PC-9 (cell line): ENCODE measurements at regions of chr10 and their contacts with region 1.

Region 1: DNA sequence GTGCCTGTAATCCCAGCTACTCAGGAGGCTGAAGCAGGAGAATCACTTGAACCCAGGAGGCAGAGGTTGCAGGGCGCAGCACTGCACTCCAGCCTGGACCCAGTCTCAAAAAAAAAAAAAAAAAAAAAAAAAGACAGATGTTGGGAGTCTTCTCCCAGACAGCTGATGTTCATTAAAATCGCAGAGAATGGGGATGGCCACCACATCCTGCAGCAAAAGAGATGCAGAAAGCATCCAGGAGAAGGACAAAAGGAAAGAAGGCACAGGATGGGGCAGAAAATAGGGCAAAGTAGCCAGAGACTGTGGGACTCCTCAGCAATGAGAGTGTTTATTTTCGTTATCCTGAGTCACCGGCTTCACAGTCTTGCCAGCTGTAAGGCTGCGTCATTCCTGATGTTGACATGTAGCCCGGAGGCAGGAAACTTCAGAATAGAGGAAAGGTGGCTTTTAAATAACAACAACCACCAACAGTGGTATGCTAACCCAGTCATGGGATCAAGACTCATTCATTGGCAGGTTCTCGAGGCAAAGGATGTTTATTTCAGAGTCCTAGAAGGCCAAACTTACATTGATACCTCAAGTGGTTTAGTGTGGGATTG is 149.5 kb upstream of the SVIL start:
- DNase-seq: peak; percentile 76 to 95
- H3K4me3 ChIP-seq: no peak overlapping the region
- H3K27ac ChIP-seq: peak overlapping the region; percentile 86
- H3K4me1 ChIP-seq: peaks cover 30% of the 10 kb centered on the region
- H3K27me3 ChIP-seq: no peaks in the 10 kb centered on the region
- CTCF ChIP-seq: no peak

Region 2: GRCh38 chr10:29277296-29277695 is 507.0 kb before region 1 on chr10:
- CTCF ChIA-PET with region 1: no interaction called
- POLR2A ChIA-PET with region 1: no interaction called
- intact Hi-C with region 1: no loop called
- DNase-seq: no peak
- H3K4me3 ChIP-seq: no peak overlapping the region
- H3K27ac ChIP-seq: no peak overlapping the region
- H3K4me1 ChIP-seq: no peaks in the 10 kb centered on the region
- H3K27me3 ChIP-seq: peaks cover 7% of the 10 kb centered on the region; the same call in 1 of the 2 replicates
- CTCF ChIP-seq: no peak

Region 3: DNA sequence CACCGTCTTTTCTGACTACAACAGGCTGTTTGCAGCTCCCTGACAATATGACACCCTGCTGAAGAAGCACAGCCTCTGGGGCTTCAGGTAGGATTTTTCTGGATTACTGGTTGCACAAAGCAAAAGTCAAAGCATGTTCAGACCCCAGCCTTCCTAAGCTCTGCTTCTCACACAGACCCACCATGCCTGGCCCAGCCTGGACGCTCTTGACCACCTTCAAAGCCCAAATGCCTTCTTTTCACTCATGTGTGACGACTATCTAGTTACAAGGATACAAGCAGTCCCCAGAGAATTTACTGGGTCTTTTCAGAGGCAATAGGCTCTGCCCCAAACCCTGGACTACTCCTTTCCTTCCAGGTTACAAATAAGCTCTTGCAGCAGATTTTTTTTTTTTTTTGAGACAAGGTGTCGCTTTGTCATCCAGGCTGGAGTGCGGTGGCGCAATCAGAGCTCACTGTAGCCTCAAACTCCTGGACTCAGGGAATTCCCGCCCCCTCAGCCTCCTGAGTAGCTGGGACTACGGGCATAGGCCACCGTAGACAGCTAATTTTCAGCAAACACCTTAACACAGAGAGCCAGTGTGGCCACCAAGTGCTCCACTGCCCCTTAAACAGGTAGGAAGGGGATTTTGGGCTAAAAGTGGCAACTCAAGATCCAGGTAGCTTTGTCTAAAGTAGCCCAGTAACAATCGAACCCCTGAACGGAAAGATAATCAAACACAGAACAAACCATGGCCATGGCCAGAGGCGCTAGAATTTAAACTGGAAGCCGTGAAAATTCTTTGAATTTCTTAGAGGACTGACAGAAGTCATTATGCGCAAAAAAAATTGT is 165.7 kb before region 1 on chr10:
- CTCF ChIA-PET with region 1: no interaction called
- POLR2A ChIA-PET with region 1: interaction called, 18 read pairs
- intact Hi-C with region 1: no loop called
- DNase-seq: peak; percentile 74 to 77
- H3K4me3 ChIP-seq: peak overlapping the region; percentile 35; the same call in 1 of the 2 replicates
- H3K27ac ChIP-seq: peak overlapping the region; percentile 79
- H3K4me1 ChIP-seq: peaks cover 30% of the 10 kb centered on the region
- H3K27me3 ChIP-seq: no peaks in the 10 kb centered on the region
- CTCF ChIP-seq: no peak

Region 4: DNA sequence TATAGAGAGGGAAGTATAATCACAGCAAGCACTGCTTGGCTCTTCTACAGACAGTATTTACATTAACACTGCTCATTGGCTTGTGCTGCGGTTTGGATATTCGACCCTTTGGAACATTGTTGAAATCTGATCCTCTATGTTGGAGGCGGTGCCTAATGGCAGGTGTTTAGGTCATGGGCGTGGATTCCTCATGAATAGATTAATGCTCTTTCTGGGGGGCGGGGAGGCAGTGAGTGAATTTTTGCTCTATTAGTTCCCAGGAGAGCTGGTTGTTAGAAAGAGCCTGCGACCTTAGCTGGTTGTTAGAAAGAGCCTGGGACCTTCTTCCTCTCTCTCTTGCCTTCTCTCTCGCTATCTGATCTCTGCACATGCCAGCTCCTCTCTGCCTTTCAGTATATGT is 72.2 kb before region 1 on chr10:
- CTCF ChIA-PET with region 1: no interaction called
- POLR2A ChIA-PET with region 1: no interaction called
- intact Hi-C with region 1: loop called (anchors 2 kb)
- DNase-seq: peak; percentile 17 to 61
- H3K4me3 ChIP-seq: no peak overlapping the region
- H3K27ac ChIP-seq: no peak overlapping the region
- H3K4me1 ChIP-seq: peaks cover 21% of the 10 kb centered on the region
- H3K27me3 ChIP-seq: no peaks in the 10 kb centered on the region
- CTCF ChIP-seq: no peak

Region 5: DNA sequence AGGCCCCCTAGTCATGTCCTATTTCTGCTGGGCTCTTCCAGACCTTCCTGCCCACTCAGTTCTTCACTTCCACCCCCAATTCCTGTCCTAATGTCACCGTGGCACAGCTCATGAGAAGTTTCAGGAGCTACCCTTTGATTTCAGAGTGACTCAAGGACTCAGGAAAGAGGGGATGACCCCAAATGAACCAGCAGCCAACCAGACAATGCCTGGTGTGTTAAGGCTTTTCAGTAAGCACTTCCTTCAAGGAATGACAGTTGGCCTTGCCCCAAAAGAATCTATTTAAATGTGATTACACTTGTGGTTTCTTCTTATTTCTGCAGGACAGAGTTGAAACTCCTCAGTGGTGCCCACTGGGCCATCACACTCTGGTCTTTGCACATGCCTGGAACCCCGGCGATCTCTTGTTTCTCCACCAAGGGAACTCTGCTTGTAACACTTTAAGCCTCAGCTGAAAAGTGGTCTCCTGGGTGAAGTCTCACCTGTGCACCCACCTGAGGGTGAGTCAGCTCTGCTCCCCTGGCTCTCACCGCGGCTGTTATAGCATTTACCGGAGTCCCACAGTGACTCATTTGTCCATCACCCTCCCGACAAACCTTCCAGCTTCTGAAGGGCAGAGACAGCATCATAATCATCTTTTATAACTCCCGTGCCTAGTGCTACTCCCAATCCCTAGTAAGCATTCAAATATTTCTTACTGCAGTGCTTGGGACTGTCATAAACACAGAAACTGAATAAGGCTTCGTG is 26.6 kb before region 1 on chr10:
- CTCF ChIA-PET with region 1: no interaction called
- POLR2A ChIA-PET with region 1: no interaction called
- intact Hi-C with region 1: loop called (anchors 1 kb)
- DNase-seq: peak; percentile 75 to 90
- H3K4me3 ChIP-seq: no peak overlapping the region; the same call in 1 of the 2 replicates
- H3K27ac ChIP-seq: peak overlapping the region; percentile 86
- H3K4me1 ChIP-seq: peaks cover 24% of the 10 kb centered on the region
- H3K27me3 ChIP-seq: no peaks in the 10 kb centered on the region
- CTCF ChIP-seq: no peak

Region 6: DNA sequence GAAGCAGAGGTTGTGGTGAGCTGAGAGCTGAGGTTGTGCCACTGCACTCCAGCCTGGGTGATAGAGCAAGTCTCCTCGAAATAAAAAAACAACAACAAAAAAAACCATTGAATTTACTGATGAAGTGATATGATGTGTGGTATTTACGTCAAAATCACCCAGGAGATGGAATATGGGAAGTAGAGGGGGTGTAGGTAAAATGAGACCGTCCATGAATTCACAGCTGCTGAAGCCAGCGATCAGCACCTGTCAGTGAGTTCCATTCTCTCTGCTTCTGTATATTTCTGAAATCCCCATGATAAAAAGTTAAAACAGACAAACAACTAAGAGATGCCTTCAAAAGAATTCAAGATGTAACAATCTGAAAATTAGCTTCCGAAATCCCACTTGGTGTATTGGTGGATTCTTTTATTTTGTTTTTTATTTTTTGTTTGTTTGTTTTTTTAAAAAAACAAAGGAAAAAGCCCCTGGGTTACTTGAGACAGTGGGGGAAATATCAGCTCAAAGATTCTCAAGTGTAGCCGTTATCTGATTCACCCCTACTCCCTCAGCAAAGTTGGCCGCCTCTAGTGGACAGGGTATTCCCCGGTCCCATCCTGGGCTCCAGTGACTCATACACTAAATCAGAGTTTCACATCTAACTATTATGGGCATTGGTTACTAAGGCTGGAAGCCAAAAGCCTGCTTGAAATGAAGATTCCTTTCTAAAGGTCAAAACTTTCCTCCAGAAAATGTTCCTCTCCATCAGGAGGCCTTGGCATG is 726.1 kb after region 1 on chr10:
- CTCF ChIA-PET with region 1: no interaction called
- POLR2A ChIA-PET with region 1: no interaction called
- intact Hi-C with region 1: no loop called
- DNase-seq: peak; percentile 43 to 46
- H3K4me3 ChIP-seq: no peak overlapping the region
- H3K27ac ChIP-seq: no peak overlapping the region
- H3K4me1 ChIP-seq: peaks cover 11% of the 10 kb centered on the region
- H3K27me3 ChIP-seq: no peaks in the 10 kb centered on the region
- CTCF ChIP-seq: no peak; the same call in 1 of the 2 replicates